Activated CD4-positive, alpha-beta T cell treated with anti-CD3 and anti-CD28 coated beads, Interleukin-2, amount 10 ng/mL, durations not matched to agents 24 days and 14 days (primary cell): ENCODE measurements at regions of chr18 and their contacts with region 1.

Region 1: DNA sequence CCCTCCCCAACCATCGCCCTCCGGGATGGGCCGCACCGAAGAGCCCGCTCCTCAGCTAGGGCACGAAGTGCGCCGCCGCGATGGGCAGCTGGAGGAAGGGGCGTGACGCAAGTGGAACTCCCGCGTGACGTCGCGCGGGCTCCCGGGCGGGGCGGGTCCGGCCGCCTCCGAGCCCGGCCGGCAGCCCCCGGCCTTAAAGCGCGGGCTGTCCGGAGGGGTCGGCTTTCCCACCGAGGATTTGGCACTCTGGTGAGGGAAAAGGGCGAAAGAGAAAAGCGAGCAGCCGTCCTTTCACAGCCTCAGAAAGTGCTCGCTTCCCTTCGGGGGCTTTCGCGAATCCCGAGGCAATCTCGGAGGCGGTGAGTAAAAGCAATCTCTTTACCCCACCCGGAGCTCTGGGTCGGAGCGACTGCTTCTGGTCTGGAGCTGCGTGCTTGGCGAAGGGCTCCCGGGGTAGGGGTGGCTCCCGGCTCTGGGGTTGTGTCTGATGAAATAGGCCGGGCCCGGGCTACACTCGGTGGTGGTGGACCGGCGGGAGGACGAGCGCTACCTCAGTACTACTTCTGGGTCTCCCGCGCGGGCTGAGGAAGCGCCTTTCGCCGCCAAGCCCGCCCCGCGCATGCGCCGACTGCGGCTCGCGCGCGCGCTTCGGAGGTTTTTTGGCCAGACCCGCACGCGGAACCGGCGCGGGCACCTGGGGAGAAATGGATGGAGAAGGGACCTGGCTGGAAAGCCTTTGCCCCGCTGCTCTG is at the start of gene RBBP8:
- DNase-seq: peak; percentile 97
- H3K4me3 Mint-ChIP-seq: peak within 1 kb of the TSS; percentile 89
- H3K27ac Mint-ChIP-seq: peak within 1 kb of the TSS; percentile 96
- H3K4me1 Mint-ChIP-seq: peaks cover 21% of the 10 kb centered on the region
- H3K27me3 Mint-ChIP-seq: peaks cover 3% of the 10 kb centered on the region
- total RNA-seq, gene RBBP8: 97.8 TPM in 2 replicates

Region 2: DNA sequence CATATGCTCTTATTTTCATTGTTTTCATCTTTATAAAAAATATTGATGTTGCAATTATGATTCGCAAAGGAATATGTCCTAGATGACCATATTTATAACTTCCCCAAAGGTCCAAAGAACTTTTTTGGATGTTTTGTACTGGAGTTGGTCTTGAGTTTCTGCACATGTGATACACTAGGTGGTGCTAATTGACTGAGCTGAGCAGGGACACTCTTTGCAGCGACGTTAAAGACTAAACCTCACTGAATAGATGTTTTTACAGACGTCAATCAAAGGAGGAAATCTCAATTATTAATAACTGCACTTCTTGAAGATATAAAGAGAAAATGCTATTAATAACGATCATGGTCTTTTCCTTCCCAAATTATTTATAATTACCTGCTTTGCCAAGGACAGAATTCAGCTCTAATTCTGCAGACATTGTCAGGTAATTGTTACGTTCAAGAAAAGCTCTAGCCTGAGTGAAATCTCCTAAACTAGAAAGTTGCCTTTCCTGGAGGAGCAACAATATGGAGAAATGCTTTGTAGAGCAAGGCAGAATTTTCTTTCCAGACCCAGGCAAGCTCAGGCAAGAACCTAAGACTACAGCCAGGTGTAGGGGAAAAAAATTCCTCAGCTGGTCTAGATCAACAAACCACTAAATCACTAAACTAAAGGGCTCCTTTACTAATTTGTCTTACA is 119.6 kb before region 1 on chr18:
- intact Hi-C with region 1: loop called (anchors 5 kb)
- DNase-seq: peak; percentile 69
- H3K4me3 Mint-ChIP-seq: no peak overlapping the region
- H3K27ac Mint-ChIP-seq: no peak overlapping the region
- H3K4me1 Mint-ChIP-seq: no peaks in the 10 kb centered on the region
- H3K27me3 Mint-ChIP-seq: peaks cover 22% of the 10 kb centered on the region

Region 3: GRCh38 chr18:22983175-22983574 is 49.8 kb after region 1 on chr18:
- intact Hi-C with region 1: loop called (anchors 1 kb)
- DNase-seq: no peak
- H3K4me3 Mint-ChIP-seq: no peak overlapping the region
- H3K27ac Mint-ChIP-seq: no peak overlapping the region
- H3K4me1 Mint-ChIP-seq: peaks cover 9% of the 10 kb centered on the region
- H3K27me3 Mint-ChIP-seq: no peaks in the 10 kb centered on the region

Region 4: GRCh38 chr18:23231340-23232021 is 298.1 kb after region 1 on chr18:
- intact Hi-C with region 1: loop called (anchors 10 kb)
- DNase-seq: peak; percentile 94
- H3K4me3 Mint-ChIP-seq: peak overlapping the region; percentile 57
- H3K27ac Mint-ChIP-seq: peak overlapping the region; percentile 91
- H3K4me1 Mint-ChIP-seq: peaks cover 57% of the 10 kb centered on the region
- H3K27me3 Mint-ChIP-seq: no peaks in the 10 kb centered on the region

Region 5: GRCh38 chr18:23412351-23412964 is 479.1 kb after region 1 on chr18:
- intact Hi-C with region 1: loop called (anchors 1 kb)
- DNase-seq: no peak
- H3K4me3 Mint-ChIP-seq: no peak overlapping the region
- H3K27ac Mint-ChIP-seq: no peak overlapping the region
- H3K4me1 Mint-ChIP-seq: no peaks in the 10 kb centered on the region
- H3K27me3 Mint-ChIP-seq: no peaks in the 10 kb centered on the region